ENCODE measurements at regions of chr15 and their contacts with region 1.

Region 1: GRCh38 chr15:25106209-25106608 is 151.4 kb downstream of the SNRPN start:
- DNase-seq: no peak
- ATAC-seq: peak in 3 of 4 donors; percentile 61 to 67 (median 63)
- H3K4me3 ChIP-seq: no peak overlapping the region
- H3K27ac ChIP-seq: no peak overlapping the region
- H3K4me1 ChIP-seq: no peaks in the 10 kb centered on the region
- H3K27me3 ChIP-seq: no peaks in the 10 kb centered on the region
- CTCF ChIP-seq: no peak

Region 2: GRCh38 chr15:24985224-24985623 is 121.0 kb before region 1 on chr15:
- intact Hi-C with region 1: loop called in 1 of 2 experiments (anchors 10 kb)
- DNase-seq: no peak
- ATAC-seq: peak in 3 of 4 donors; percentile 51 to 68 (median 63)
- H3K4me3 ChIP-seq: no peak overlapping the region
- H3K27ac ChIP-seq: no peak overlapping the region
- H3K4me1 ChIP-seq: no peaks in the 10 kb centered on the region
- H3K27me3 ChIP-seq: no peaks in the 10 kb centered on the region
- CTCF ChIP-seq: no peak

Region 3: DNA sequence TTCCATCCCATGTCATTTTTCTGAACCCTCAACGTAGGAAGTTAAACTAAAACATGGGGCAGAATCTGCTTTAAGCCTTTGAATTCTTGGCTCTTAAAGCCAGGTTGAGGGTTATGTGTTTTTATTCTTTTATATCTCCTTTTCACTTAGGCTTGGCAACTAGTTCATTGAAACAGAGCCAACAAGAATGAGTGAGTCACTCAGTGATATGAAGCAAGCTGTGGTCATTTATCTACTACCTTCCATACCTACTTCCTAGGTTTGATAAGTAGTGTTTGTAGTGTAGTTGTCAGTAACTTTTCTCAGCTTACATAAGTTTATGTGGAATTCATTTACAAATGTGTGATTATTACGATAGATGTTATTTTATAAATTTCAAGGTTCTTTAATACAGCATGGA is 84.0 kb before region 1 on chr15:
- intact Hi-C with region 1: loop called in 1 of 2 experiments (anchors 5 kb)
- DNase-seq: no peak
- ATAC-seq: peak in 2 of 4 donors; percentile 42 to 57
- H3K4me3 ChIP-seq: no peak overlapping the region
- H3K27ac ChIP-seq: no peak overlapping the region
- H3K4me1 ChIP-seq: no peaks in the 10 kb centered on the region
- H3K27me3 ChIP-seq: no peaks in the 10 kb centered on the region
- CTCF ChIP-seq: no peak

Region 4: DNA sequence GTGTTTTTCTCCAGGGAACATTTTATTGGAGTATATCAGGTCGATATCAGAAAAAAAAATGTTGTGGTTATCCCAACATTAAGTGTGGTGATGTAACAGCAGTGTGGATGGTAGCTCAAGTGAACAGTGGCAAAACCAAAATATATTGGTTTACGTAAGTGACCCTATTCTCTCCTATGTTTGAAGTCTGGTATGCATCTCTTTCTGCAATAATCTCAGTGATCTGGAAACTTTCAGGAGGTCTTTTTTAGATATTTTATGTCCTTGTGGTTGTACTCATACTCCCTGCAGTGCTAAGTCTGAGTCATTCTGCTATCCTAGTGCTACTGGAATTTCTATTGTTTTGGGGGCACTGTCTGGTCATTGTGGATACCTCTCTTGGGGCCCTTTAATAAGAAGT is 13.5 kb before region 1 on chr15:
- intact Hi-C with region 1: no loop called
- DNase-seq: no peak
- ATAC-seq: no peak
- H3K4me3 ChIP-seq: no peak overlapping the region
- H3K27ac ChIP-seq: no peak overlapping the region
- H3K4me1 ChIP-seq: no peaks in the 10 kb centered on the region
- H3K27me3 ChIP-seq: no peaks in the 10 kb centered on the region
- CTCF ChIP-seq: no peak